Head of caudate nucleus (tissue), 42 donors: ENCODE measurements at regions of chr1 and their contacts with region 1.

Region 1: GRCh38 chr1:92831762-92832536 is at the start of gene RPL5:
- DNase-seq: peak; percentile 89 to 99 (median 97)

Region 2: DNA sequence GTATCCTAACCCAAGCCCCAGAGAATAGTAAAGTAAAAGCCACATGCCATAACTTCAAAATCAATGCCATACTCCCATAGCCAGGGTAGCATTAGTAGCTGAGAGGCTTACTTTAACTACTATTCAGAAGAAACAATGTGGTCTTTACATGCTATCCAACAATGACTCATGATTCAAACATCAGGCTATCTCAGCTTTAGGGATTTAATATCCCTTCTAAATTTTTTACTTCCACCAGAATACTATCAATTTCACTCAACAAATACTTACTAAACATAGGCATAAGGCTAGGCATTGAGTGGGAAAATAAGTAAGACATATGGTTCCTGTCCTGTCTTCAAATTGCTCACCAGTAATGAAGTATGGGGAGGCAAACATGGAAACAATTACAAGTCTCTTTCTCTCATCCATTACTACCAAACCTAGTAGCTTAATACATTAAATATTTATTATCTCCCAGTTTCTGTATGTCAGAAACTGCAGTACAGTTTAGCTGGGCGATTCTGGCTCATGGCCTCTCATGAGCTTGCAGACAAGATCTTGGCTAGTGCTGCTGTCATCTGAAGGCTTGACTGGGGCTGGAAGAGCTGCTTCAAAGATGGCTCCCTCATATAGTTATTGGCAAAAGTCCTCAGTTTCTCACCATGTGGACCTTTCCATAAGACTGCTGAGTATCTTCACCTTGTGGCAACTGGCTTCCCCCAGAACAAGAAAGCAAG is 77.8 kb before region 1 on chr1:
- intact Hi-C with region 1: loop called (anchors 10 kb)
- DNase-seq: no peak